ENCODE measurements at regions of chr1 and their contacts with region 1.

Region 1: DNA sequence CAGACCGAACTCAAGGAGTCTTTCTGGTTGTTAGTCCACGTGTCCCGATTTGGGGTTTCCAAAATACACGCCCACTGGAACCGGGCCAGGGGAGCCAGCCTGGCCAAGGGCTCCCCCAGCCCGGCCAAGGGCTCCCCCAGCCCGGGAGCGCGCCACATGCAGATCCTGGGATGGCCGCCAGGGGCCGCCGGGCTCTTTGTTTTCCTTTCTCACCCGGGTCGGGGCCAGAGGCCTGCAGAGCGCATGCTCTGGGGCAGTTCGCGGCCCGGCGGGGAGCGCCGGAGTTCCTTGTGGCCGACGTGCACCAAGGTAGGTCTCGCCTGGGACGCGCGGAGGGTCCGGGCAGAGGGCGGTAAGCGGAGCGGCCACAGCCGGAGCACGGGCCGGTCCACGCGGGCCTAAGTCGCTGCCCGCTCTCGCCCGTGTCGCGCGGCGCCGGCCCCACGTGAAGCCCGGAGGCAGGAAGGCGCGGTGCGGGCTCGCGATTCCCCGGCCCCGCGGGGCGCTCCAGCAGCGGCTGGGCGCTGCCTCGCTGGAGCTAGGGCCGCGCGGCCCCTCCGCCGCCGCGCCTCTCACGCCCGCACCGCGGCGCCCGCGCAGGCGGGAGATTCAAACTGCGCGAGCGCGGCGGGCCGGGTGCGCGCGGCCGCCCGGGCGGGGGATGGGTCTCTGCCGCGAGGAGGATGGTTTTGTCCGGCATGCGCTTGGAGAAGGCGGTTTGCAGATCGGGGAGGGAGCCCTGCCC is 12.3 kb downstream of the RCC1 start:
- DNase-seq: peak; percentile 93
- ATAC-seq: peak; percentile 81
- H3K4me3 Mint-ChIP-seq: peak overlapping the region; percentile 81
- H3K27ac Mint-ChIP-seq: peak overlapping the region; percentile 91
- H3K4me1 Mint-ChIP-seq: peaks cover 29% of the 10 kb centered on the region
- H3K27me3 Mint-ChIP-seq: no peaks in the 10 kb centered on the region
- CTCF ChIP-seq: peak; percentile 99

Region 2: GRCh38 chr1:28147264-28148094 is 370.7 kb before region 1 on chr1:
- CTCF ChIA-PET with region 1: no interaction called
- POLR2A ChIA-PET with region 1: no interaction called
- intact Hi-C with region 1: no loop called
- DNase-seq: no peak
- ATAC-seq: no peak
- H3K4me3 Mint-ChIP-seq: no peak overlapping the region
- H3K27ac Mint-ChIP-seq: no peak overlapping the region
- H3K4me1 Mint-ChIP-seq: peaks cover 16% of the 10 kb centered on the region
- H3K27me3 Mint-ChIP-seq: no peaks in the 10 kb centered on the region
- CTCF ChIP-seq: no peak

Region 3: GRCh38 chr1:28602536-28603439 is 84.6 kb after region 1 on chr1:
- CTCF ChIA-PET with region 1: interaction called, 10 read pairs
- POLR2A ChIA-PET with region 1: interaction called, 4 read pairs
- intact Hi-C with region 1: no loop called
- DNase-seq: peak; percentile 50
- ATAC-seq: no peak
- H3K4me3 Mint-ChIP-seq: no peak overlapping the region
- H3K27ac Mint-ChIP-seq: no peak overlapping the region
- H3K4me1 Mint-ChIP-seq: peaks cover 7% of the 10 kb centered on the region
- H3K27me3 Mint-ChIP-seq: no peaks in the 10 kb centered on the region
- CTCF ChIP-seq: peak; percentile 77

Region 4: GRCh38 chr1:28631713-28632112 is 113.5 kb after region 1 on chr1:
- CTCF ChIA-PET with region 1: no interaction called
- POLR2A ChIA-PET with region 1: no interaction called
- intact Hi-C with region 1: no loop called
- DNase-seq: no peak
- ATAC-seq: no peak
- H3K4me3 Mint-ChIP-seq: no peak overlapping the region
- H3K27ac Mint-ChIP-seq: no peak overlapping the region
- H3K4me1 Mint-ChIP-seq: peaks cover 16% of the 10 kb centered on the region
- H3K27me3 Mint-ChIP-seq: no peaks in the 10 kb centered on the region
- CTCF ChIP-seq: no peak

Region 5: GRCh38 chr1:28642847-28643635 is 124.9 kb after region 1 on chr1 and contains the start of gene TAF12:
- CTCF ChIA-PET with region 1: no interaction called
- POLR2A ChIA-PET with region 1: interaction called, 135 read pairs
- intact Hi-C with region 1: loop called (anchors 5 kb)
- DNase-seq: peak; percentile 91
- ATAC-seq: peak; percentile 84
- H3K4me3 Mint-ChIP-seq: peak within 1 kb of the TSS; percentile 98
- H3K27ac Mint-ChIP-seq: peak within 1 kb of the TSS; percentile 97
- H3K4me1 Mint-ChIP-seq: peaks cover 44% of the 10 kb centered on the region
- H3K27me3 Mint-ChIP-seq: no peaks in the 10 kb centered on the region
- CTCF ChIP-seq: peak; percentile 42
- total RNA-seq, gene TAF12: 21.3 to 23.0 TPM

Measured in activated CD8-positive, alpha-beta T cell treated with anti-CD3 and anti-CD28 coated beads for 36 hours (primary cell).